ENCODE measurements at regions of chr17 and their contacts with region 1.

Region 1: DNA sequence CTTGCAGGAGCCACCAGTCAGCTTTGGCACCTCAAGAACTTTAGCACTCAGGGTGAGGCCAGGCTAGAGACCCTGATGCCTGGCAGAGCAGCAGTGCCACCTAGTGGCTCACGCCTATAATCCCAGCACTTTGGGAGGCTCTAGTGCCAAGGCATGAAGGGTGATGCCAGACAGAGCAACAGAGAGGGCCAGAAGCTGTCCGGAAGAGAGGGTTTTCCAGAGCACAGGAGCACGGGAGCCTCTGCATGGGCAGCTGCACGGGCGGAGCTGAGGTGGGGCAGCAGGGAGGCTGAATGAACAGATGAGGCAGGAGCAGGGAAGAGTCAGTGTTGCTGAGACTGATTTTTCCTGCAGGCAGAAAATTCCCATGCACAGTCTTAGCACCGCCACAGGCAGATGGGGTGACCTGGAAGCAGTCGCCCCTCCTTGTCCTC is 38.9 kb downstream of the MYH3 start:
- DNase-seq: peak; percentile 78
- H3K4me3 Mint-ChIP-seq: no peak overlapping the region
- H3K27ac Mint-ChIP-seq: no peak overlapping the region
- H3K4me1 Mint-ChIP-seq: peaks cover 16% of the 10 kb centered on the region
- H3K27me3 Mint-ChIP-seq: no peaks in the 10 kb centered on the region
- CTCF ChIP-seq: peak; percentile 91

Region 2: GRCh38 chr17:9924735-9925191 is 693.5 kb before region 1 on chr17:
- CTCF ChIA-PET with region 1: interaction called, 189 read pairs
- POLR2A ChIA-PET with region 1: no interaction called
- intact Hi-C with region 1: loop called (anchors 1 kb)
- DNase-seq: peak; percentile 89
- H3K4me3 Mint-ChIP-seq: no peak overlapping the region
- H3K27ac Mint-ChIP-seq: peak overlapping the region; percentile 22
- H3K4me1 Mint-ChIP-seq: peaks cover 6% of the 10 kb centered on the region
- H3K27me3 Mint-ChIP-seq: no peaks in the 10 kb centered on the region
- CTCF ChIP-seq: peak; percentile 80

Region 3: DNA sequence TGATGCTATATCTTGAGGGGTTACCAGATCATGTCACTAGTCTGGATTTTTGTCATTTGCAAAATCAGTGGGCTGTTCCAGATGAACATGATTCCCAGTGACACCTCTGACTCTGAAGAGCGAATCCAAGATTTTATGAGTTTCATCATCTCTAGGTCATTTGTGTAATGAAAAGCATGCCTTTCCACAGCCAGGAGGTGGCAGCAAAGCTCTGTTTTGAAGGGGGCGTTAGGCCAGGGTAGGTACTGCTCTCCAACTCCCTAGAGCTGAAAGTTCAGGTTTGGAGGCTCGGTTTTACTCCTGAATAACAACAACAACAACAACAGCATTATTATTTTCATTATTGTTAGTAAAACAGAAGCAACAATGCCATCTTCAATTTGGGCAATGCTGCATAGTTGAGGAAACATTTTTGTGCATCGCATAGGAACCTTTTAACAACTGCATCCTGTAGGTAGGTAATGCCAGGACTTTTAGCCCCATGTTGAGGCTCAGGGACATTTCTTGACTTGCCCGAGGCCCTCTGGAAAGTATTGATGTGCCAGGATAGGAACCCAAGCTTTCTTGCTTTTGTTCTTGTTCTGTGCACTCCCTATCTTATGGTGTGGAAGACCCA is 322.4 kb before region 1 on chr17:
- CTCF ChIA-PET with region 1: interaction called, 70 read pairs
- POLR2A ChIA-PET with region 1: no interaction called
- intact Hi-C with region 1: loop called (anchors 1 kb)
- DNase-seq: peak; percentile 61
- H3K4me3 Mint-ChIP-seq: no peak overlapping the region
- H3K27ac Mint-ChIP-seq: no peak overlapping the region
- H3K4me1 Mint-ChIP-seq: peaks cover 5% of the 10 kb centered on the region
- H3K27me3 Mint-ChIP-seq: no peaks in the 10 kb centered on the region
- CTCF ChIP-seq: peak; percentile 37

Region 4: DNA sequence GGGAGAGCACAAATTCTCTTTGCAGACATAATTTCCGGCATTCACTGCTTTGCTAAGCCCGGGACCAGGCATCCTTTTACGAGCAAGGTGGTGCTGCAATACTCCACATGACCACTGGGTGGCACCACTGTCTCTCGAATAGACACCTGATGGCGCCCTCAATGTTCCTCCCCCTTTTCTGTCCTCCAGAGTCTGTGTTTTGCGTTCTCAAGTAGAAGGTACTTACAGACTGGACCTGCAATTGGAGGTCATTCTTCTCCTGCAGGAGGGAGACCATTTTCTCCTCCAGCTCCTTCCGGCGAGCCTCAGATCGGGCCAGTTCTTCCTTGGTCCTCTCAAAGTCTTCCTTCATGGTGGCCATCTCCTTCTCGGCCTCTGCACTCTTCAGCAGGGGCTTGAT is 290.6 kb before region 1 on chr17:
- CTCF ChIA-PET with region 1: interaction called, 337 read pairs
- POLR2A ChIA-PET with region 1: interaction called, 3 read pairs
- intact Hi-C with region 1: loop called (anchors 1 kb)
- DNase-seq: peak; percentile 75
- H3K4me3 Mint-ChIP-seq: no peak overlapping the region
- H3K27ac Mint-ChIP-seq: no peak overlapping the region
- H3K4me1 Mint-ChIP-seq: no peaks in the 10 kb centered on the region
- H3K27me3 Mint-ChIP-seq: peaks cover 20% of the 10 kb centered on the region
- CTCF ChIP-seq: peak; percentile 94

Region 5: GRCh38 chr17:10600571-10600970 is 17.6 kb before region 1 on chr17:
- CTCF ChIA-PET with region 1: interaction called, 104 read pairs
- POLR2A ChIA-PET with region 1: no interaction called
- intact Hi-C with region 1: no loop called
- DNase-seq: no peak
- H3K4me3 Mint-ChIP-seq: no peak overlapping the region
- H3K27ac Mint-ChIP-seq: no peak overlapping the region
- H3K4me1 Mint-ChIP-seq: no peaks in the 10 kb centered on the region
- H3K27me3 Mint-ChIP-seq: peaks cover 40% of the 10 kb centered on the region
- CTCF ChIP-seq: no peak

Region 6: GRCh38 chr17:10646392-10646990 is 28.3 kb after region 1 on chr17:
- CTCF ChIA-PET with region 1: interaction called, 269 read pairs
- POLR2A ChIA-PET with region 1: no interaction called
- intact Hi-C with region 1: no loop called
- DNase-seq: peak; percentile 71
- H3K4me3 Mint-ChIP-seq: no peak overlapping the region
- H3K27ac Mint-ChIP-seq: no peak overlapping the region
- H3K4me1 Mint-ChIP-seq: no peaks in the 10 kb centered on the region
- H3K27me3 Mint-ChIP-seq: no peaks in the 10 kb centered on the region
- CTCF ChIP-seq: peak; percentile 79

Measured in MCF 10A (cell line).